ENCODE measurements at regions of chr11 and their contacts with region 1.

Region 1: DNA sequence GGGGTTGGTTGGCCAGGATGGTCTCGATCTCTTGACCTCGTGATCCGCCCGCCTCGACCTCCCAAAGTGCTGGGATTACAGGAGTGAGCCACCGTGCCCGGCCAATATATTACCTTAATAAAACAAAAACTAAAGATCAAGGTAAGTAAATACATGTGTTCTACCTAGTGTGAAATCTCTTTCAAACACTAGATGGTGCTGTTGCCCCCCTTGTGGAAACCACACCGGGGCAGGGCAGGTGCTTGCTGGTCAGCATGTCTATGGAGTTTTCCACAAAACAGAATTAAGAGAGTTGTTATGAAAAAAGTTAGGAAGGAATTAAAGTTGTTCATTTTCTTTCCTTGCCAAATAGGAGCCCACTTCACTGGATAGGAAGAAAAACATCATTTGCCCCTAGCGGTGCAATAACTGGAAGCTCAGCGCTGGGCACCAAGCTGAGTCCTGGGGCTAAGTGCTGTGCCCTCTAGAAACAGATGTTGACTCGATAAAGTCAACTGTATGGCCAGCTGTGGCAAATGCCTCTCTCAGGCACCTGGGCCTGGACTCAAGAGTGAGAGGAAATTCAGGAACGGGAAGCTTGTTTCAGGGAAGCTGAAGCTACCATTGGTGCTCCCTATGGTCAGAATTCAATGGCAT is 6.3 kb upstream of the KCNJ5 start:
- DNase-seq: peak; percentile 61 to 70 (median 67)
- ATAC-seq: peak; percentile 96
- H3K4me3 ChIP-seq: no peak overlapping the region
- H3K27ac ChIP-seq: no peak overlapping the region
- H3K4me1 ChIP-seq: no peaks in the 10 kb centered on the region
- H3K27me3 ChIP-seq: peaks cover 0 to 11% of the 10 kb centered on the region in 2 experiments; a peak in 2 of 5 replicates
- CTCF ChIP-seq: peak; percentile 71 to 81 (median 81)
- EP300 ChIP-seq: no peak
- POLR2A ChIP-seq: no peak
- RAD21 ChIP-seq: peak; percentile 85 to 87

Region 2: DNA sequence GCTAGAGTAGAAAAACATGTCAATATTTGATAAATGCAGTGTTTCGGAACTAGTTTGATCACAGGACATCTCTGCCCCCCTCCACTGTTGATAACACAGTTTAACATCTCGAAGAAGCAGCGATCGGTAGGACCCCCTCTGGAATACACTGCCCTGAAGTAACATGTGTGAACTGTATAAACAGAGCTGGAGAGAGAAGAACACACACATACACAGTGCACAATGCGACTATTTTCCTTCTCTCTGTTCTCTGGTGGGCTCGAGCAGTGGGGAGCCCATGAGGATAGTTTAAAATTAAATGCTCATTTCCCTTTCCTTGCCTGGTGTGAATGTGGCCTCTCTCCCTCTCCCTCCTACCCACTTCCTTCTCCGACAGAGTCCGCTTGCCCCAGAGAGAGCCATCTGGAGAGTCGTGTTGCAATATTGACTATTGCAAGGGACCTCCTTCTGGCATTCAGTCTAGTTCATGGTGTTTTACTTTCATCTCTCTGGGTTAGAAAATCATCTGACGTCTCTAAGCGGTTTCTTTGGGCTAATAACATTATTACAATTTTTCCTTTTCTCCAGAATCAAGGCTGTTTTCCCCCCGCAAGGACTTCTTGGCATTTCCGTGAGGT is 439.2 kb after region 1 on chr11:
- CTCF ChIA-PET with region 1: no interaction called
- POLR2A ChIA-PET with region 1: no interaction called
- in situ Hi-C with region 1: loop called (anchors 25 kb)
- intact Hi-C with region 1: no loop called
- DNase-seq: no peak
- ATAC-seq: no peak; the same call in 2 of the 3 replicates
- H3K4me3 ChIP-seq: no peak overlapping the region
- H3K27ac ChIP-seq: no peak overlapping the region
- H3K4me1 ChIP-seq: no peaks in the 10 kb centered on the region
- H3K27me3 ChIP-seq: no peaks in the 10 kb centered on the region
- CTCF ChIP-seq: no peak
- EP300 ChIP-seq: no peak
- POLR2A ChIP-seq: no peak
- RAD21 ChIP-seq: no peak

Region 3: GRCh38 chr11:129331871-129332274 is 447.1 kb after region 1 on chr11:
- CTCF ChIA-PET with region 1: no interaction called
- POLR2A ChIA-PET with region 1: no interaction called
- in situ Hi-C with region 1: no loop called
- intact Hi-C with region 1: loop called (anchors 2 kb)
- DNase-seq: peak; percentile 30 to 54 (median 43)
- ATAC-seq: peak; percentile 93
- H3K4me3 ChIP-seq: no peak overlapping the region
- H3K27ac ChIP-seq: no peak overlapping the region
- H3K4me1 ChIP-seq: no peaks in the 10 kb centered on the region
- H3K27me3 ChIP-seq: no peaks in the 10 kb centered on the region
- CTCF ChIP-seq: peak; percentile 58 to 76 (median 73)
- EP300 ChIP-seq: no peak
- POLR2A ChIP-seq: no peak
- RAD21 ChIP-seq: peak; percentile 24 to 61

Measured in K562 (cell line).